Posterior cingulate gyrus (tissue), 11 donors: ENCODE measurements at regions of chr6 and their contacts with region 1.

Region 1: DNA sequence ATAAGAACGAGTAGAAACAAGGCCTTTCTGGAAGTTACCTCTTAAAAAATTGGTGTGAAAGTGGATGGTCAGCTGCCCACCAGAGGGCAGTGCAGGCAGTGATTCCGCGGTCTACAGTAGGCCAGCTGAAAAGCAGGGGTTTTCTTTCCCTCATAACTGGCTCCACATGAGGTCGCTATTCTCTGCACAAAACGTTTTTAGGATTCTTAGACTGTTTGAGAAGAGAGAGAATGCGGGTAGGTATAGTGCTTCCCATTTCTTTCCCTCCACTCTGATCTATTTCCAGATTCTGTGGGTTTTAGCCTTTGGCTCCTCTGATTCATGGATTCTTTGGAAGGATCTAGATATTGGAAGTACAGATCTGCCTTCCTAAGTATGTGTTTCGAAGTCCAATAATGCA is 14.2 kb downstream of the FIG4 start:
- DNase-seq: peak; percentile 57 to 96 (median 82)

Region 2: DNA sequence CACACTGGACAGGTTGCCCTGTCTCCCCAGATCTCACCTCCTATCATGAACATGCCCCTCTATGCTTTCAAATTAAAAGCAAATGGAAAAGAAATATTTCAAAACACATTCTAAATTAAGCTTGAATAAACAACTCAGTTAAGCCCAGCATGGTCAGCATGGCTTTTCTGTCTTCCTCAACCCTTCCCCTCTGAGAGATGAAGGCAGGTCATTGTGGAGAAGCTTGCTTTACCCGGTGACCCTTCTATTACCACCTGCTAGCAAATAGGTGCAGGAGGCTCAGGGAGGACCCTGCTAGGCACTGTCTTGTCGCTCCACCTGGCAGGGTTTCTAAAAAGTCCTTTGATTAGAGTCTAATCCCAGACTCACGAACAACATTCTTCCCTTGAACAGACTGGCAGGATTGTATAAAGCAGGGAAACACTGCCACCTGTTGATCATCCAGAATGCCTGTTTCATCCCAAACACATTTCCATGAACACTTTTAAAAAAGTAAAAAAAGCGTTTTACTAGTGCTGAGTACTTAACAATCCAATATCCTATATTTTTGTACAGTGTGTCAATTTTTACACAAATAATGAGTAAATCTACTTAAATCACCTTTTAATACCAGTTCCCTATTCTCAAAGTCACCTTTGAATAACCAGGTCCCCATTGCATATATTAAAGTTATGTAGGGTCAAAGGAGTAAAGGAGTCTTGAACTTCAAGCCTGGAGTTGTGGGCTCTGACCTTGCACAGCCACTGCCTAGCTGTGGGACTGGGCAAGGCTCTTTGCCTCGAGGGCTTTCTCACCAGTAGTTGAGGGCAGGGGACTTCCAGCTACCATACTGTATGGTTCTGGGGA is 348.4 kb after region 1 on chr6:
- intact Hi-C with region 1: loop called (anchors 1 kb)
- DNase-seq: peak in 1 of 10 donors; percentile 42

Region 3: DNA sequence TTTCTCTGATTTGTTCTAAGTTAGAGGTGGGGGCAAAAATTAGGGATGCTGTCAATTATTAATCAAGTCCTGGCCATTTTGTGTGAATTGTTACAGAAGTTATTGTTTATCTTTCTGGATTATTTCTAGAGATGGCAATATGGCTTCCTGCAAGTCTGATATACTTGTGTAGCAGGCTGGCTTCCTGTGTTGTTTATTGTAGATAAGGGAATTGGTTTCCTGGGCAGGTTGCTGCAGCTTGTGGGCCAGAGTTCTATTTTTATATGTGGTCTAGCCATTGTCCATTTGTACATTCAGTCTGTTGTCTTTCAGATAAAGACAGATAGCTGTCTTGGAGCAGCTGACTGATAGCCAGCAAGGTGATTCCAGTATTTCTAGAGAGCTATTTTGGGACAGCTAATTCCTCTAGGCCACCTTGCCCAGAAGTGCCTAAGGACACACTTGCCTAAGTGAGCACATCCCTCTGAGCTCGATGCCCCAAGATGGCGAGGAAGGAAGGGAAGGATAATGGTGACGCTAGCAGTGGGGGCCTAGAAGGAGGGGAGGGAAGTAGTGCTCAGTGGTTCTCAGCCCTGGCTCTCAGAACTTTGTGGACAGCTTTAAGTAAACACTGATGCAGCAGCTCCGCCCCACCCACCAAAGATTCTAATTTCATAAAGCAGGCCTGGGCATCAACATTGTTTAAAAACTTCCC is 684.6 kb after region 1 on chr6:
- intact Hi-C with region 1: loop called (anchors 2 kb)
- DNase-seq: no peak